ENCODE measurements at regions of chrX and their contacts with region 1.

Region 1: GRCh38 chrX:119067023-119067739 is 5.6 kb upstream of the CT47C1 start:
- DNase-seq: no peak
- ATAC-seq: peak; percentile 85
- H3K4me3 Mint-ChIP-seq: no peak overlapping the region
- H3K27ac Mint-ChIP-seq: no peak overlapping the region
- H3K4me1 Mint-ChIP-seq: no peaks in the 10 kb centered on the region
- H3K27me3 Mint-ChIP-seq: no peaks in the 10 kb centered on the region
- CTCF ChIP-seq: no peak

Region 2: DNA sequence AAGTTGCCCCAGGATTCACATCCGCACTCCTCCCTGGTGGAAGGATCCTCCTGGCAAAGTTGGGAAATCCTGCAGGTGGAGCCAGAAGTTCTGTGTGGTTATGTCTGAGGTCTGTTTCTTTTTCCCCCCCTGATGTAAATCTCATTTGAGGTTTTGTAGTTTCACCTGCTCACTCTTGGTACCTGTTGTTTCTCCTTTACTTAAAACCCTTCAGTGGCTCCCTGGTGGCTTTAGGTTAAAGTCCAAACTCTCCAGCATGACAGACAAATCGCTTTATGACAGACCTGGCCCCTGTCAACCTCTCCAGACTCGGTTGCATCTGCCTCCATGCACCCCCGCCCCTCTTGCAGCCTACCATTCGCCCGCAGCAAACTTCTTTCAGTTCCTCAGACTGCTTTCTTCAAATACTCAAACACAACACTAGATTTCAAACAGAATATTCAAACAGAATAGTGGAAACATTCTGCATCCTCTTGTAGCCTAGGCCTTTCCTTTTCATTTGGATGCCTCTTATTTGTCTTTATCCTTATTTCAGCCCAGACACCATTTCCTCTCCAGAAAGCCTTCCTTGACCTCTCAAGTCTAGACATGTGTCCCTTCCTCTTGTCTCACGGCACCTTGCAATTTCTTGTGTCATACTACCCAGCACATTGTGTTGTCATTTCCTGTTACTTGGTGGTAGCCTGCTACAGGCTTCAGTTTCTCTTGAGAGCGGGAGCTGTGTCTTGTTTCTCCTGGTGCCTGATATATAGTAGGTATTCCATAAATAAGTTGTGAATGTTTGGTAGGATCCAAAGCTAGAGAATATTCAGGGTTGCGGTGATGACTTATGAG is 315.0 kb before region 1 on chrX:
- CTCF ChIA-PET with region 1: no interaction called
- POLR2A ChIA-PET with region 1: no interaction called
- intact Hi-C with region 1: no loop called
- DNase-seq: no peak
- ATAC-seq: peak; percentile 86
- H3K4me3 Mint-ChIP-seq: peak overlapping the region; percentile 53
- H3K27ac Mint-ChIP-seq: peak overlapping the region; percentile 88
- H3K4me1 Mint-ChIP-seq: peaks cover 24% of the 10 kb centered on the region
- H3K27me3 Mint-ChIP-seq: no peaks in the 10 kb centered on the region
- CTCF ChIP-seq: no peak

Region 3: GRCh38 chrX:118839334-118839958 is 227.7 kb before region 1 on chrX:
- CTCF ChIA-PET with region 1: interaction called, 5 read pairs
- POLR2A ChIA-PET with region 1: no interaction called
- intact Hi-C with region 1: loop called (anchors 2 kb)
- DNase-seq: peak; percentile 62
- ATAC-seq: peak; percentile 88
- H3K4me3 Mint-ChIP-seq: peak overlapping the region; percentile 68
- H3K27ac Mint-ChIP-seq: no peak overlapping the region
- H3K4me1 Mint-ChIP-seq: peaks cover 8% of the 10 kb centered on the region
- H3K27me3 Mint-ChIP-seq: peaks cover 4% of the 10 kb centered on the region
- CTCF ChIP-seq: no peak

Region 4: DNA sequence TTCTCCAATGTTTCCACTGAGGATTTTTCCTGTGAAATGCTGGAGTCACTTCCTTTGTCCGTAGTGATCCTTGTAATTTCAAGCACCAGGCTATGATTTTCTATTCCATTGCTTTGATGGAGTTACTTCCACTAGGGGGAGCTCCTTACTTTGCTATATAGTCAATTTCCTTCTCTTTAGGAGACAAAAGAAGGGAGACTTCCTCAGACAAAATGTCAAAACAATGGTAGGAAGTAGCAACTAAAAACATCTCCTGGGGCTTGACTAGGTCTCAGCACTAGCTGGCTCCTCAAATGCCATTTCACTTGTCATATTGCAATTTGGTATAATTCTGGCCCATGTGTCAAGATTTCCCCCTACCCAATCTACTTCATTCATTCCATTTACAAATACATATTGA is 219.5 kb before region 1 on chrX:
- CTCF ChIA-PET with region 1: interaction called, 22 read pairs
- POLR2A ChIA-PET with region 1: no interaction called
- intact Hi-C with region 1: loop called (anchors 1 kb)
- DNase-seq: no peak
- ATAC-seq: no peak
- H3K4me3 Mint-ChIP-seq: no peak overlapping the region
- H3K27ac Mint-ChIP-seq: no peak overlapping the region
- H3K4me1 Mint-ChIP-seq: no peaks in the 10 kb centered on the region
- H3K27me3 Mint-ChIP-seq: no peaks in the 10 kb centered on the region
- CTCF ChIP-seq: no peak

Region 5: DNA sequence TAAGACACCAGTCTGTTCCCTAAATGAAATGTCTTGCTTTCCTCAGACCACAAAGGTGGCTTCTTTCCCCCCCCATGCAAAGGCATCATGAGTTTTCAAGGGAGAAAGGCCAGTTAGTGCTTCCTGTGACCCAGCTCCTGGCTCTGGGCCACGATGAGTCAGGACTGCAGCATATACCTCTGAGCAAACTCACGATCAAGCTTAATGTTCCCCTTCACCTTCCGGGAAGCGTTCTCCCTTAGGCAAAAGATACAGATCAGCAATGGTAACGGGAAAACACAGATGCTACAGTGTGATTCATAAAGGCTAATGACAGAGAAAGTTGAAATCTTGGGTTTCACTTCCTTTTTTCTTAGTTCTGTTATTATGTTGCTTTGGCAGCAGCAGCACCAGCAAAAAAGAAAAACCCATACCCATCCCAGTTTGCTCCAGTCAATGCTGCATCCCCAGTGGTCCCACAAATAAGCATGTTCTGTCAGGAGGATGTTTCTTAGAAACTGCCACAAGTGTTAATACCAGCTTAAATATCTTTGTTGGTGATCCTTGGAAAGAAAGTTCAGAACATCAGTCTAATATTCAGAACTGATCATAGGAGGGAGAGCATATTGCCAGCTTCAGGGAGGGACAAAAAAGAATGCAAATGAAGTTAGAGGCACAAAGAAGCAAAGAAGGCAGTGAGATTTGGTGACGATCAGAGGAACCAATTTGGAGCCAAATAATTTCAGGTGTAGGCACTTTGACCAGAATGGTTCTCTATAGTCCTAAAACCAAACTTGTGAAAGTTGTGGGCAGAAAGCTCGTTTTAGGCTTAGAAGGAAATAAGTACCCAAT is 51.6 kb before region 1 on chrX:
- CTCF ChIA-PET with region 1: no interaction called
- POLR2A ChIA-PET with region 1: interaction called, 3 read pairs
- intact Hi-C with region 1: loop called (anchors 2 kb)
- DNase-seq: peak; percentile 23
- ATAC-seq: peak; percentile 90
- H3K4me3 Mint-ChIP-seq: peak overlapping the region; percentile 53
- H3K27ac Mint-ChIP-seq: peak overlapping the region; percentile 94
- H3K4me1 Mint-ChIP-seq: peaks cover 28% of the 10 kb centered on the region
- H3K27me3 Mint-ChIP-seq: no peaks in the 10 kb centered on the region
- CTCF ChIP-seq: no peak

Measured in activated B cell treated with CpG ODN at 0.5 μM for 24 hours (primary cell).